Posterior vena cava (tissue), 2 donors: ENCODE measurements at regions of chr4 and their contacts with region 1.

Region 1: DNA sequence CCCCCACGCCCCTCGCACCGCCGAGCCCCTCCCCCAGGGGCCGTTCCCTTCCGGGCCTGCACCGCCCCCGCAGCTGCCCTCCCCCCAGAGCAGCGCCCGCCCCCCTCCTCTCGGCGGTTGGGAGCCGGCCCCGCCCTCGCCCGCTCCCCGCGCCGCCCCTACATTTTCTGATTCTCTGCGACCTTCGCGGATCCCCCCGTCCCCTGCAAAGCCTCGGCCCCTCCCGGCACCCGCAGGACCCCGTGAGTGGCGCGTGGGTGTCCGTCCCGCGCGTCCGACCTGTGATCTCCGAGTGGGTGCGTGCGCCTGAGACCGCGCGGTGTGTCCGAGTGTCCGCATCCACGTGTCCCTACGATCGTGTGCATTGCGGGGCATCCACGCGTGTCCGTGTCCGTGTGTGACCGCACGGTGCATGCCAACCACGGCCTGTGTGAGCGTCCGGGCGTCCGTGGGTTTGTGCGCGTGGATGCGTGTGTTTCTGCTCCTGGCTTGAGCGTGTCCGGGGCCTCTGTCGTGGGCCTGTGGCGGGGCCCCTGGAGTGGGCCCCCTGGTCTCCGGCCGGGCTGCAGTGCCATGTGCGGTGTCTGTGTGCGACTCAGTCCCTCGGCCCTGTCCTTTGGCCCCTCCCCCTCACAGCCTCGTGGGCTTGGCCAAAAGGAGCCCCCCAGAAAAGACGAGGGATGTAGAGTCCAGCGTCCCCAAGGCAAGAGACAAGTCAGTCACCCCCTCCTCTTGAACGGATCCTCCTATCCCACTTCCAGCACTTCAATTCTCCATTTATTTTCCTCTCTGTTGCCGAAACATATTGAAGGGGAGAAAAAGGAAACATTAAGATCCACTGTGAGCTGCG is 8.8 kb upstream of the NKX1-1 start:
- DNase-seq: peak; percentile 74

Region 2: DNA sequence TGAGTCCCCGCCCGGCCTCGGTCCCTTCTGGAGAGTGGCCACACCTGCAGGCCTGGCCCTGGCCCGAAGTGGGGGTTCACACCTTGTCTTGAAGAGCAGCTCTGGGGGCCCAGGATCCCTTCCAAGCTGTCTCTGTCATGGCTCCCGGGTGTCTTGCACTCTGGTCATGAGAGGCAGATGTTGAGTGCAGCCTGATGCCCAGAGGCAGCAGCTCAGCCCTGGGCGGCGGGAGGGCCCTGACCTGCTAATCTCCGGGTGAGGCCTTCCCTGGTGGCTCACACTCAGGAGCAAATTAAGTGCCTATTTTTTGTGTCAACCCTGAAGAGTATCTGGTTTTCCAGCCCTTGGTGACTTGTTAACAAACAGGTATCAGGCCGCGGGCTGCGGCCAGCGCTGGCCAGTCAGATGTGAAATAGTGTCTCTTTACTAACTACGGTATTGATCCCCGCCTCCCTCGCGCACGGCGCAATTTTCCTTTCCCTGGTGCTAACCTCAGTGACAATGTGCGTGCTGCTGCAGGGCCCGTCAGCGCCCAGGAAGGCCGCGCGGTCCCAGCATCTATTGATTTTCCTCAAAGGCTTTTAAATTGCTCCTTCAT is 33.0 kb before region 1 on chr4:
- intact Hi-C with region 1: loop called in 1 of 2 experiments (anchors 1 kb)
- DNase-seq: peak; percentile 75